ENCODE measurements at regions of chr16 and their contacts with region 1.

Region 1: GRCh38 chr16:2155091-2156021 is at the start of gene TRAF7:
- DNase-seq: peak; percentile 100
- H3K4me3 Mint-ChIP-seq: peak within 1 kb of the TSS; percentile 96
- H3K27ac Mint-ChIP-seq: peak within 1 kb of the TSS; percentile 82
- H3K4me1 Mint-ChIP-seq: peaks cover 29% of the 10 kb centered on the region
- H3K27me3 Mint-ChIP-seq: no peaks in the 10 kb centered on the region
- CTCF ChIP-seq: no peak
- total RNA-seq, gene TRAF7: 87.4 and 98.6 TPM in 2 replicates

Region 2: DNA sequence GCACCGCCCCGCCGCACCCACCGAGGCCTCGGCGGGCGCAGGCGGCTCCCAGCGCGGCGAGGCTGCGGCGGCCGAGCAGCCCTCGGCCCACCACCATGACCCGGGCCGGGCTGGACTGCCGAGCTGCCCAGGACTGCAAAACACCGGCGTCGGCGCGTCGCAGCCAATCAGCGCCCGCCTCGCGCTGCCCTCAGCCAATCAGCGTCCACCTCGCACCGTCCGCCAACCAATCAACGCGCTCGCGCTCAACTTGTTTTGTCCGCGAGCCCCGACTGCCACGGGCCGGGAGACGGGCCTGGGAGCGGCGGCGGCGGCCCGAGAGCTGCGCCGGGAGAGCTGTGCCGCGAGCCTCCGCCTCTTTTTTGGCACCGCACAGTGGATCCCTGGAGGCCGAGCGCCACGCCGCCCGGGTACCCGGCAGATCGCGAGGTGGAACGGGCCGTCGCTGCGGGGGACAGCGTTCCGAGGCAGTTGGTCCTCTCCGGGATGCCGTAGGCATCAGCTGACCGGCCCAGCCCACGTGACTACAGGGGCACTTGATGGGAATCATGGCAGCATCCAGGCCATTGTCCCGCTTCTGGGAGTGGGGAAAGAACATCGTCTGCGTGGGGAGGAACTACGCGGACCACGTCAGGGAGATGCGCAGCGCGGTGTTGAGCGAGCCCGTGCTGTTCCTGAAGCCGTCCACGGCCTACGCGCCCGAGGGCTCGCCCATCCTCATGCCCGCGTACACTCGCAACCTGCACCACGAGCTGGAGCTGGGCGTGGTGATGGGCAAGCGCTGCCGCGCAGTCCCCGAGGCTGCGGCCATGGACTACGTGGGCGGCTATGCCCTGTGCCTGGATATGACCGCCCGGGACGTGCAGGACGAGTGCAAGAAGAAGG is 328.4 kb before region 1 on chr16 and contains the starts of genes FAHD1 and HAGH:
- CTCF ChIA-PET with region 1: no interaction called
- POLR2A ChIA-PET with region 1: interaction called, 15 read pairs
- intact Hi-C with region 1: no loop called
- DNase-seq: peak; percentile 89
- H3K4me3 Mint-ChIP-seq: peak within 1 kb of the TSS; percentile 94
- H3K27ac Mint-ChIP-seq: peak within 1 kb of the TSS; percentile 92
- H3K4me1 Mint-ChIP-seq: peaks cover 7% of the 10 kb centered on the region
- H3K27me3 Mint-ChIP-seq: no peaks in the 10 kb centered on the region
- CTCF ChIP-seq: no peak
- total RNA-seq, gene FAHD1: 18.4 and 21.4 TPM in 2 replicates
- total RNA-seq, gene HAGH: 44.5 and 69.8 TPM in 2 replicates

Region 3: GRCh38 chr16:1983544-1984346 is 171.6 kb before region 1 on chr16 and contains the start of gene GFER:
- CTCF ChIA-PET with region 1: interaction called, 4 read pairs
- POLR2A ChIA-PET with region 1: interaction called, 18 read pairs
- intact Hi-C with region 1: no loop called
- DNase-seq: peak; percentile 82
- H3K4me3 Mint-ChIP-seq: peak within 1 kb of the TSS; percentile 76
- H3K27ac Mint-ChIP-seq: no peak within 1 kb of the TSS
- H3K4me1 Mint-ChIP-seq: peaks cover 10% of the 10 kb centered on the region
- H3K27me3 Mint-ChIP-seq: no peaks in the 10 kb centered on the region
- CTCF ChIP-seq: no peak
- total RNA-seq, gene GFER: 34.6 and 40.8 TPM in 2 replicates

Region 4: GRCh38 chr16:2047330-2048115 is 107.8 kb before region 1 on chr16 and contains the starts of genes NTHL1 and TSC2:
- CTCF ChIA-PET with region 1: interaction called, 3 read pairs
- POLR2A ChIA-PET with region 1: interaction called, 17 read pairs
- intact Hi-C with region 1: no loop called
- DNase-seq: peak; percentile 95
- H3K4me3 Mint-ChIP-seq: peak within 1 kb of the TSS; percentile 86
- H3K27ac Mint-ChIP-seq: peak within 1 kb of the TSS; percentile 63
- H3K4me1 Mint-ChIP-seq: peaks cover 23% of the 10 kb centered on the region
- H3K27me3 Mint-ChIP-seq: no peaks in the 10 kb centered on the region
- CTCF ChIP-seq: peak; percentile 39
- total RNA-seq, gene NTHL1: 16.4 and 17.7 TPM in 2 replicates
- total RNA-seq, gene TSC2: 99.8 and 136 TPM in 2 replicates

Region 5: DNA sequence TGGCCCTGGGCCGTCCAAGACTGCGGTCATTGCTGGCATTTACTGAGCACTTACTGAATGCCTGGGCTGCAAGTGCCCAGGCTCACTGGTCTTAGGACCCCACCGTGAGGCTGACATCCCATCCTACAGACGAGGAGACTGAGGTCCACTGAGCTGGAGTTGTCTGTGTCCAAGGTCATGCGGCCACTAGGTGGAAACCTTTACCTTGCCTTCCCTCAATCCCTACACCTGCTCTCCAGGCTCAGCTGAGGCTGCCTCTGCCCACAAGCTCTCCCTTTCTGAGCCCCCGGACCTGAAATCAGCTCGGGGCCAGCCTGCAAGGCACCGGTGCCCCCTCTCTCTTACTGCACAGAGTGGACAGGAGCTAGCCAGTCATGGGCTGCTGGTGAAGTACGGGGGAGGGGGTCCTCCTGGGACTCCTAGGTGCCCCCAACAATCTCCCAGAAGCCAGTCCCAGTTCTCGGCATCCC is 39.5 kb after region 1 on chr16:
- CTCF ChIA-PET with region 1: interaction called, 4 read pairs
- POLR2A ChIA-PET with region 1: interaction called, 10 read pairs
- intact Hi-C with region 1: no loop called
- DNase-seq: peak; percentile 70
- H3K4me3 Mint-ChIP-seq: no peak overlapping the region
- H3K27ac Mint-ChIP-seq: no peak overlapping the region
- H3K4me1 Mint-ChIP-seq: no peaks in the 10 kb centered on the region
- H3K27me3 Mint-ChIP-seq: no peaks in the 10 kb centered on the region
- CTCF ChIP-seq: peak; percentile 68

Region 6: GRCh38 chr16:2223375-2224182 is 68.2 kb after region 1 on chr16 and contains the start of gene E4F1:
- CTCF ChIA-PET with region 1: no interaction called
- POLR2A ChIA-PET with region 1: interaction called, 10 read pairs
- intact Hi-C with region 1: loop called (anchors 2 kb)
- DNase-seq: peak; percentile 98
- H3K4me3 Mint-ChIP-seq: peak within 1 kb of the TSS; percentile 78
- H3K27ac Mint-ChIP-seq: peak within 1 kb of the TSS; percentile 85
- H3K4me1 Mint-ChIP-seq: peaks cover 4% of the 10 kb centered on the region
- H3K27me3 Mint-ChIP-seq: no peaks in the 10 kb centered on the region
- CTCF ChIP-seq: no peak
- total RNA-seq, gene E4F1: 26.2 and 28.4 TPM in 2 replicates